MCF 10A (cell line): ENCODE measurements at regions of chr9 and their contacts with region 1.

Region 1: DNA sequence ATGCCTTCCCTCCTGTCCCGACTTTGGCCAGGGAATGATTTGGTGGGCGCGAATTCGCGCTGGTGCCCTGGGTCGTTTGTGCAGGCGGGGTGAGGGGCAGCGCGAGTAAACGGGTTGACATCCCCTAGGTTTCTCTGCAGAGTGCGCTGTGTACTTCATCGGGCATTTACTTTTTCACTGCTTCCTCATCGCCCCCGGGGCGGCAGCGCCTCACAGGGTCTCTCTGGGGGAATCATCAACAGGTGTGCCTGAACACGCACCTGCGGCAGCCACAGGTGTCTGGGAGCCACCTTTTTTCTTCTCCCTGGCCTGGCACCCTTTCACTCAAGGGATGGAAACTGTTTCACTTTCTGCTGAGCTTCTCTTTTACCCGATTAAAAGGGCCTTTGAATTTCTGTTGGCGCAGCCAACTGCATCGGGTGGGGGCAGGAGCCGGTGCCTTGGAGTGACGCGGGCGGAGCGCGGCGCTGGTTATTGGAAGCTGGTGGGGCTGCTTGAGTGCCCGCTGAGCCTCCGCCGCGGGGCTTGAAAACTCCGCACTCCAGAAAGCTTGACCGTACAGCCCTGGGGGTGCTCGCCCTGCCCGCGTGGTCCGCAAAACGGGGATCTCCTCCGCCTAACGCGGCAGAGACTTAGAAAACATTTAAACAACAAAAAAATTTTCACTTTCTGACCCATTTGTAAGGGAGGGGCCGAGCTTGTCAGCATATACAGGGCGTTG is 52.1 kb upstream of the TJP2 start:
- DNase-seq: peak; percentile 68
- H3K4me3 Mint-ChIP-seq: peak overlapping the region; percentile 89
- H3K27ac Mint-ChIP-seq: peak overlapping the region; percentile 73
- H3K4me1 Mint-ChIP-seq: peaks cover 6% of the 10 kb centered on the region
- H3K27me3 Mint-ChIP-seq: no peaks in the 10 kb centered on the region
- CTCF ChIP-seq: no peak

Region 2: DNA sequence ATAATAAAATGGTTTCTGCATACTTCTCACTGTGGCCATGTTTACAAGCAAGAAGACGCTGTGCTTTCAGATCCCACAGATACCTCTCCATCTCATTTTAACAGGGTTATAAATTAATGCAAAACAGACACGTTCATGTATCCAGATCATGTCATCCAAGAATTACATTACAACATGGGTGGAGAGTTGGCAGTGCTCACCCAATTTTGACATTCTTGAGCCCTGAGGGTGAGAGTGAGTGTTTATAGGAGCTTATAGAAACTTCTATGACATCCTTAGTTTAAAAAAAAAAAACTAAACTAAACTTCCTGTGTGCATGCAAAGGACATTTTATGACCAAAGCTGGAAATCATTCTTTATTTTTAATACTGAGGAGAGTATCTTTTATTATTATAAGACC is 117.2 kb before region 1 on chr9:
- CTCF ChIA-PET with region 1: no interaction called
- POLR2A ChIA-PET with region 1: no interaction called
- intact Hi-C with region 1: no loop called
- DNase-seq: peak; percentile 64
- H3K4me3 Mint-ChIP-seq: no peak overlapping the region
- H3K27ac Mint-ChIP-seq: no peak overlapping the region
- H3K4me1 Mint-ChIP-seq: peaks cover 6% of the 10 kb centered on the region
- H3K27me3 Mint-ChIP-seq: peaks cover 65% of the 10 kb centered on the region
- CTCF ChIP-seq: no peak

Region 3: DNA sequence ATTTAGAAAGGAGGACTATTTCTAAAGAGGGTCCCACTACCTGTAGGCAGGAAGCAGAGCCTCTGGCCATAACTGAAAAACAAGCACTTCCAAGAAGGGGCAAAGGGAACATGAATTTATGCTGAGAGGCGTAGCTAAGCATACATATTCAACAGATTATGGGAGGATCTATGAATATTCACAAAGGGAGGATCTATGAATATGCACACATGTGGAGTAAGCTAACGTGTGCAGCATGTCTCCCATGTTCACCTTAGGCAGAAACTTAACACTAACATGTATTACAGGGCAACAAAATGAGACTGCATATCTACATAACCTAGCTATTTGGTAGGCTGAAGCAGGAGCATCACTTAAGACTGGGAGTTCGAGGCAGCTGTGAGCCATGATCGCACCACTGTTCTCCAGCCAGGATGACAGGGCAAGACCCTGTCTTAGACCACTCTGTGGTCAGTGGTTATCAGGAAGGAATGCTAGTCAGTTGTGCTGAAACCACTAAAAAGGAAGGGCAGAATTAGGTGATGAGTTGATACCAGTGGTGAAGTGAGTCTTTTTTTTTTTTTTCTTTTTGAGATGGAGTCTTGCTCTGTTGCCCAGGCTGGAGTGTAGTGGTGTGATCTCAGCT is 65.7 kb before region 1 on chr9:
- CTCF ChIA-PET with region 1: interaction called, 16 read pairs
- POLR2A ChIA-PET with region 1: interaction called, 6 read pairs
- intact Hi-C with region 1: loop called (anchors 1 kb)
- DNase-seq: no peak
- H3K4me3 Mint-ChIP-seq: no peak overlapping the region
- H3K27ac Mint-ChIP-seq: peak overlapping the region; percentile 69
- H3K4me1 Mint-ChIP-seq: no peaks in the 10 kb centered on the region
- H3K27me3 Mint-ChIP-seq: no peaks in the 10 kb centered on the region
- CTCF ChIP-seq: no peak

Region 4: DNA sequence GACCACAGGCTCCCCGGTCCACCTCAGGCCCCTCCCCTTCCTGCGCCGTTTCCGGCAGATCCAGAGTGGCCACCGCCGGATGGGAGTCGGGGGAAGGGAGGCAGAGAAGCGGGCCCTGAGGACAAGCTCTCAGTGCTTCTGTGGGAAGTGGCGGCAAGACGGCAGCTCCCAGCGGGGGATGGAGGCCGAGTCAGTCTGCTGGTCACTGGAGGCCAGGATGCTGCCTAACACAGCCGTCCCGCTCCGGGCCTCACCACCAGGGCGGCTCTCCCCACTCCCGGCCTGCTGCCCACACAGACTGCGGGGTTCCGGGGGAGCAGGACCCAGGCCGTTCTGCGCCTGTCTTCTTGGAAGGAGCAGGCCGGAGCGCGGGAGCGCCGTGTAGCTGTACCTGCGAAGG is 55.0 kb before region 1 on chr9:
- CTCF ChIA-PET with region 1: no interaction called
- POLR2A ChIA-PET with region 1: no interaction called
- intact Hi-C with region 1: no loop called
- DNase-seq: no peak
- H3K4me3 Mint-ChIP-seq: no peak overlapping the region
- H3K27ac Mint-ChIP-seq: no peak overlapping the region
- H3K4me1 Mint-ChIP-seq: no peaks in the 10 kb centered on the region
- H3K27me3 Mint-ChIP-seq: no peaks in the 10 kb centered on the region
- CTCF ChIP-seq: no peak

Region 5: GRCh38 chr9:69104830-69105527 is 17.0 kb before region 1 on chr9:
- CTCF ChIA-PET with region 1: interaction called, 8 read pairs
- POLR2A ChIA-PET with region 1: interaction called, 41 read pairs
- intact Hi-C with region 1: no loop called
- DNase-seq: peak; percentile 73
- H3K4me3 Mint-ChIP-seq: no peak overlapping the region
- H3K27ac Mint-ChIP-seq: peak overlapping the region; percentile 61
- H3K4me1 Mint-ChIP-seq: no peaks in the 10 kb centered on the region
- H3K27me3 Mint-ChIP-seq: no peaks in the 10 kb centered on the region
- CTCF ChIP-seq: no peak

Region 6: GRCh38 chr9:69168709-69169217 is 46.8 kb after region 1 on chr9:
- CTCF ChIA-PET with region 1: interaction called, 5 read pairs
- POLR2A ChIA-PET with region 1: interaction called, 151 read pairs
- intact Hi-C with region 1: no loop called
- DNase-seq: peak; percentile 96
- H3K4me3 Mint-ChIP-seq: peak overlapping the region; percentile 41
- H3K27ac Mint-ChIP-seq: peak overlapping the region; percentile 77
- H3K4me1 Mint-ChIP-seq: peaks cover 34% of the 10 kb centered on the region
- H3K27me3 Mint-ChIP-seq: no peaks in the 10 kb centered on the region
- CTCF ChIP-seq: no peak

Region 7: DNA sequence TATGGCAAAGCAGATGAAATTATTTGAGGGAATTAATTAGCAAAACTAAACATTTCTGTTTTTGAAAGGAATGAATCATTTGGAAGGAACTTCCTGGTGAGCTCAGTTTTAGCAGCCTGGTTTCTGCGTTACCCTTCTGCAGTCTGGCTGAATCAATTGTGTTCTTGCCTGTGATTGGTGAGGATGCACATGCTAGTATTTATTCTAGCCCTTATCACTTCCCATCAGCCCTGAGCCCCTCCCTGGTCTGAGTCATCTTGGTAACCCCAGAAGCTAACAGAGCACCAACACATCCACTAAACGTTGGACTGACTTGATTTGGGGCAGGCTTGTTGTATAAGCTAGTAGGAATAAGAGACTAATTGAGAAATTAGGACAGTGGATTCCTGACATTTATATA is 58.7 kb after region 1 on chr9:
- CTCF ChIA-PET with region 1: interaction called, 12 read pairs
- POLR2A ChIA-PET with region 1: interaction called, 151 read pairs
- intact Hi-C with region 1: loop called (anchors 2 kb)
- DNase-seq: peak; percentile 95
- H3K4me3 Mint-ChIP-seq: peak overlapping the region; percentile 51
- H3K27ac Mint-ChIP-seq: peak overlapping the region; percentile 82
- H3K4me1 Mint-ChIP-seq: peaks cover 42% of the 10 kb centered on the region
- H3K27me3 Mint-ChIP-seq: no peaks in the 10 kb centered on the region
- CTCF ChIP-seq: no peak

Region 8: DNA sequence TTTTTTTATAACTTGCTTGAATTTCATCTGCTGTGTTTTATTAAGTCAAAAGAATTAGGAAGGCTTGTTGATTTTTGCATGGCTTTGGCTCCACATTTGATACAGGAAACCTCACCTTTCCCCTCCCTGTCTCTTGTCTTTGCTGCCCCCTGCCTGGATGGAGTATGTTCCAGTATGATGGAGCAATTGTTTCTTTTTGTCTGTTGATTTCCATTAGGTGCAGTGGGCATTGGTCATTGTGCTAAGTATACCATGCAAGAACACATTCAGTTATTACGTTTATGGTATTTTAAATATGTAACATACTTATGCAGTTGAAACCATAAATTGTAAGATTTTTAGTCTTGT is 71.7 kb after region 1 on chr9:
- CTCF ChIA-PET with region 1: interaction called, 17 read pairs
- POLR2A ChIA-PET with region 1: interaction called, 14 read pairs
- intact Hi-C with region 1: loop called (anchors 1 kb)
- DNase-seq: no peak
- H3K4me3 Mint-ChIP-seq: no peak overlapping the region
- H3K27ac Mint-ChIP-seq: no peak overlapping the region
- H3K4me1 Mint-ChIP-seq: no peaks in the 10 kb centered on the region
- H3K27me3 Mint-ChIP-seq: no peaks in the 10 kb centered on the region
- CTCF ChIP-seq: no peak